Activated CD4-positive, alpha-beta T cell treated with anti-CD3 and anti-CD28 coated beads for 36 hours (primary cell): ENCODE measurements at regions of chr4 and their contacts with region 1.

Region 1: GRCh38 chr4:168923526-168924194 is 86.4 kb downstream of the CBR4 start:
- DNase-seq: peak; percentile 65
- ATAC-seq: peak; percentile 61
- H3K4me3 Mint-ChIP-seq: no peak overlapping the region
- H3K27ac Mint-ChIP-seq: no peak overlapping the region
- H3K4me1 Mint-ChIP-seq: no peaks in the 10 kb centered on the region
- H3K27me3 Mint-ChIP-seq: no peaks in the 10 kb centered on the region

Region 2: DNA sequence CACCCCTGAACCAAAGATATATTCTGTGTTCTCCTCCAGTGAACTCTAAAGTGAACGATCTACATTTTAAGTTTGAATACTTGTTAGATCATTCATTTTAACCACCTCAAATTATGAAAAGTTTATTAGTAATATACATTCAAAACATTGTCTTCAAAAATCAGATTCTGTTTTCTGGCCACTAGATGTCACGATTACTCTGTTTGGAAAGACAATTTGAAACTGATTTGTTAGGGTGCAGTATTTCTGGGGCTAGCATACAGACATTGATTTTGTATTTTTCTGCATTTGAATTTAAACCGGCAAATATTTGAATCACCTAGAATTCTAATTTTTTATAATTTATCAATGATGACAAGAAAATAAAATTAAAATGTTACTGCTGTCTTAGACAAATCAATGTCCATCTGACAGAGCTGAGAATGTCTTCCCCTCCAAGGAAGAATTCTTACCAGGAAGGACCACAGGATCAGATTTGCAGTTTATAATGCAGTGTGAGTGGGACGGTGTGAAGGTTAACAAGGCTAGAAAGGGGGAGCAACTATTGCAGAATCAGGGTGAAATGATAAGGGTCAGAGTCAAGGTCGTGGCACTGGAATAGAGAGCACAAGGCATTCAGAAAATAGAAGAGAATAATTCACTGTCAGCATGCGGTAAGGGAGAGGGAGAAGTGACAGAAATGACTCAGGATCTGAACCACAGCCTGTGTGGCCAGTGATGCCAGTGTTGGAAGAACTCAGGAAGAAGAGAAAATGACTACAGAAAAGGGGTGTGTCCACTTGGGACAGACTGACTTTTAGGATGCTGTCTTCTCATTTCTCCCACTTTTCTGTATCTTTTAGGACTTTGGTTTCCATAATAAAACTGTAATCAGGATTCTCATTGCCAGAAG is 739.7 kb before region 1 on chr4:
- CTCF ChIA-PET with region 1: interaction called, 3 read pairs
- POLR2A ChIA-PET with region 1: no interaction called
- intact Hi-C with region 1: loop called (anchors 1 to 5 kb)
- DNase-seq: no peak
- ATAC-seq: no peak
- H3K4me3 Mint-ChIP-seq: no peak overlapping the region
- H3K27ac Mint-ChIP-seq: no peak overlapping the region
- H3K4me1 Mint-ChIP-seq: peaks cover 4% of the 10 kb centered on the region
- H3K27me3 Mint-ChIP-seq: no peaks in the 10 kb centered on the region

Region 3: DNA sequence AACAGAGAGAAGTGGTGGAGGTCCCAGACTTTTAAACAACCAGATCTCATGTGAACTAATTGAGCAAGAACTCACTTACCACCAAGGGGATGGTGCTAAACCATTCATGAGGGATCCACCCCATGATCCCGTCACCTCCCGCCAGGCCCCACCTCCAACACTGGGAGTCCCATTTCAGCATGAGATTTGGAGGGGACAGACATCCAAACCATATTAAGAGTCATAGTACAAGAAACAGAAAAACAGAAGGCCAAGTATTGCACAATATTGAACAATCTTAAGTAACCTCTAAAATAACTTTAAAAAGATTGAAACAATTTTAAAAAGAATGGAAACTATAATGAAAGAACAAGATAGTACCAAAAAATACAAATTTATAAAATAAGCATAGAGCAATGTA is 23.6 kb before region 1 on chr4:
- CTCF ChIA-PET with region 1: interaction called, 15 read pairs
- POLR2A ChIA-PET with region 1: no interaction called
- intact Hi-C with region 1: no loop called
- DNase-seq: no peak
- ATAC-seq: no peak
- H3K4me3 Mint-ChIP-seq: no peak overlapping the region
- H3K27ac Mint-ChIP-seq: no peak overlapping the region
- H3K4me1 Mint-ChIP-seq: no peaks in the 10 kb centered on the region
- H3K27me3 Mint-ChIP-seq: no peaks in the 10 kb centered on the region

Region 4: GRCh38 chr4:169485791-169486742 is 562.4 kb after region 1 on chr4:
- CTCF ChIA-PET with region 1: interaction called, 9 read pairs
- POLR2A ChIA-PET with region 1: no interaction called
- intact Hi-C with region 1: loop called (anchors 1 kb)
- DNase-seq: peak; percentile 53
- ATAC-seq: peak; percentile 49
- H3K4me3 Mint-ChIP-seq: no peak overlapping the region
- H3K27ac Mint-ChIP-seq: no peak overlapping the region
- H3K4me1 Mint-ChIP-seq: no peaks in the 10 kb centered on the region
- H3K27me3 Mint-ChIP-seq: no peaks in the 10 kb centered on the region

Region 5: GRCh38 chr4:169492438-169493163 is 568.9 kb after region 1 on chr4:
- CTCF ChIA-PET with region 1: interaction called, 13 read pairs
- POLR2A ChIA-PET with region 1: no interaction called
- intact Hi-C with region 1: loop called in 1 of 2 experiments (anchors 1 kb)
- DNase-seq: peak; percentile 41
- ATAC-seq: peak; percentile 57
- H3K4me3 Mint-ChIP-seq: no peak overlapping the region
- H3K27ac Mint-ChIP-seq: no peak overlapping the region
- H3K4me1 Mint-ChIP-seq: no peaks in the 10 kb centered on the region
- H3K27me3 Mint-ChIP-seq: no peaks in the 10 kb centered on the region

Region 6: DNA sequence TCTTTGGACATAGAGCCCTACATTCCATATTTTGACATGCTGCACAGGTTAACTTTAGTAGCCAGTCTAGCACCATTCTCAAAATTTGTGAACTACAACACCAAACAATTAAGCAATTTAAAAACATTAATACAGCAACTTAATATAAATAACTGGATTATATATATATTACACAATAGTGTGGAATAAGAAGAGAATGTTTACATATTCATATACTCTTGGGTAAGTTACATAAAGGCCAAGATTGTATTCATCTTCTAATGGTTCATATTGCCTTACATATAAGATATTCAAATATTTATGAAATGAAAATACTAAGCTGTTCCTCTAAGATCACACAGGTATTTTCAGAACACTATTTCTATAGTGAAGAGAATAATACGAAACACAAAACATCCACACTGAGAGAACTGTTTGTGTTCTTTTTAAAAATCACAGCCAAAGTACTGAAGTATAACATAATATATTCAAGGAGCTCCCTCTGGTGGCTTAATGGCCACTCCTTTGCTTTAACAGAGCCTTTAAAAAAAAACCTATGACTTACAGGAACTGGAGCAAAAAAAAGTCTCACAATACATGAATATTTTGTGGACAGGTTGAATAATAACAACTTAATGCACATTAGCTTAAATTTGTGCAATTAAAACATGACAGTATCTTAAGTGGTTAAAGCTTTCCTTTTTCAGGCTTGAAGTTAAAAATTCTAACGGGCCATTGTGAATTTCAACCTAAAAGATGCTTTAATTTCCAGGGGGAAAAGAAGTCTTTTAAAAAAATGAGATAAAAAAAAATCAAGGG is 642.6 kb after region 1 on chr4:
- CTCF ChIA-PET with region 1: interaction called, 7 read pairs
- POLR2A ChIA-PET with region 1: no interaction called
- intact Hi-C with region 1: loop called (anchors 1 kb)
- DNase-seq: peak; percentile 35
- ATAC-seq: no peak
- H3K4me3 Mint-ChIP-seq: no peak overlapping the region
- H3K27ac Mint-ChIP-seq: peak overlapping the region; percentile 73
- H3K4me1 Mint-ChIP-seq: peaks cover 5% of the 10 kb centered on the region
- H3K27me3 Mint-ChIP-seq: no peaks in the 10 kb centered on the region

Region 7: GRCh38 chr4:169621731-169622481 is 698.2 kb after region 1 on chr4:
- CTCF ChIA-PET with region 1: no interaction called
- POLR2A ChIA-PET with region 1: no interaction called
- intact Hi-C with region 1: no loop called
- DNase-seq: no peak
- ATAC-seq: peak; percentile 38
- H3K4me3 Mint-ChIP-seq: peak overlapping the region; percentile 93
- H3K27ac Mint-ChIP-seq: peak overlapping the region; percentile 89
- H3K4me1 Mint-ChIP-seq: peaks cover 57% of the 10 kb centered on the region
- H3K27me3 Mint-ChIP-seq: no peaks in the 10 kb centered on the region

Region 8: GRCh38 chr4:170047771-170048354 is 1124.2 kb after region 1 on chr4:
- CTCF ChIA-PET with region 1: interaction called, 3 read pairs
- POLR2A ChIA-PET with region 1: no interaction called
- intact Hi-C with region 1: loop called (anchors 5 to 10 kb)
- DNase-seq: peak; percentile 75
- ATAC-seq: no peak
- H3K4me3 Mint-ChIP-seq: no peak overlapping the region
- H3K27ac Mint-ChIP-seq: no peak overlapping the region
- H3K4me1 Mint-ChIP-seq: no peaks in the 10 kb centered on the region
- H3K27me3 Mint-ChIP-seq: no peaks in the 10 kb centered on the region